ENCODE measurements at regions of chr15 and their contacts with region 1.

Region 1: DNA sequence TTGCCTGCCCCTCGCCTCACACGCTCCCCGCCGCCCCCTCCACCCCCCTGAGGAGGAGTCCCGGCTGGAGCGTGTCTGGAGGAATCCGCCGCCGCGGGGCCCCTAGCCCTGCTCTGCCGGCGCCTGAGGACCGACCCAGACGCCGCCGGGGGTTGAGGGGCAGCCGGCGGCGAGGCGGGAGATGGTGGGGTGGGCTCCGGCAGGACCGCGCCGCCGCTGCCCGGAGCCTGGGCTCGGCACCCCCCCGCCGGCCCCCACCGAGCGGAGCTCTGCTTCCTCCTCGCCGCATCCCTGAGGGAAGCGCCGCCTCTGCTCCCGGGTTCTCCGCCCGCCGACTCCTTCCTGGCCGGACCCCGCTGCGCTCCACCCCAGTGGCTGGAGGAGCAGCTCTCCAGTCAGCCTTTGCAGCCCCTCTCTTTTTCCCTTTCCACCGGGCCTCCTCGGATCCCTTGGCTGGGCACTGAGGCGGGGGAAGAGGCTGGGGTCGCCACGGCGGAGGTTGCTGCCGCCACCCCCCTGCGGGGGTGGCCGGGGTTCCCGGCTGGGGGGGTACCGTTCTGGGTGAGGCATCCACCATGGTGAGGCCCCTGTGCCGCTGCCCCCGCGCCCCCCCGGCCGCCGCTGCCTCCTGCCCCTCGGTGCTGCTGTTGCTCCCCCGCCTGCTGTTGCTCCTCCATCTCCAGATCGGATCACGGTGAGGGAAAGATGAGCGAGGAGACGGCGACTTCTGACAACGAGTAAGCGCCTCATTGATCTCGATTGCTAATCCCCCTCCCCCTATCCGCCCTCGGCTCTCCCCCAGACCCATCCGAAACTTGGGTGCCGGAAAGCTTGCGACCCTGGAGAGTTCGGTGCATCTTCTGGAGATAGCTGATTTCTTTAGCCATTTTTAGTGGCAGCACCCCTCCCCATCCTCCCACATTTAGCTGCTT is at the start of gene SPRED1:
- DNase-seq: peak; percentile 49
- ATAC-seq: peak; percentile 11
- H3K4me3 Mint-ChIP-seq: peak within 1 kb of the TSS; percentile 85
- H3K27ac Mint-ChIP-seq: peak within 1 kb of the TSS; percentile 69
- H3K4me1 Mint-ChIP-seq: peaks cover 25% of the 10 kb centered on the region
- H3K27me3 Mint-ChIP-seq: peaks cover 29% of the 10 kb centered on the region
- total RNA-seq, gene SPRED1: 0.90 to 0.96 TPM

Region 2: DNA sequence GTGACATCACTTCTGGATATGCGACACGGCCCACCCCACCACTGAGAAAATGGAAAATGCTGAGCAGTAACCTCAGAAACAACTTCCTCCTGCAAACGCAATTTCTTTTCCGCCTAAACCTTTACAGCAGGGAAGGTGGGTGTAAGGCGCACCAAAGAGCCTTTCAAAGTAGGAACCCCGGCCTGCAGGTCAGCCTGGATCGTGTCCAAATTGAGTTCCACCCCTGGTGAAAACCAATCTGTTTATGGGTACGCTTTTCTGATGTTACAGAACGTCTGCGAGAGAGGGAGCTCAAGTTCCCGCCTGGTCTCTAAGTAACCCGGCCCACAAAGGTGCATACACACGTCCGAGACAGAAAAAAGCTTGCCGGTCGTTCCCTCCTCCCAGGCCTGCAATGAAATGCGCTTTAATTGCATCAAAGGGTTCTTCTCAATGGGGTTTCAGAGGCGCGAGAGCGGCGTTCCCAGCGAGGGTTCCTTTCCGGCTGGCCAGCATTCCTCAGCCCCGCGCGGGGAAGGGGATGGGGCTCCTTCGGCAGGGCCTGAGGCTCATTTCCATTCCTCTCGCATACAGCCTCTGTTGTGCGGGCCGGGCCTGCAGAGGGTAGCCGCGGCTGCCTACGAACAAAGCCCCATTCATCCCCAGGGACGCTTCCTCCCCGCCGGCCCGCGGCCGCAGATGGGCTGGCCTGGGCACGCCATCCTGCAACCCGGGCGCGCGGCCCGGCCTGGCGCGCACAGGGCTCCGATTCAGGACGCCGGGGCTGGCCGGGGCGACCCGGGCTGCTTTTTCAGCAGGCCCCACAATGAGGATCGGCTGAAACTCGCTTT is 180.2 kb before region 1 on chr15:
- CTCF ChIA-PET with region 1: no interaction called
- POLR2A ChIA-PET with region 1: no interaction called
- intact Hi-C with region 1: loop called (anchors 5 to 10 kb)
- DNase-seq: peak; percentile 53
- ATAC-seq: peak; percentile 52
- H3K4me3 Mint-ChIP-seq: peak overlapping the region; percentile 49
- H3K27ac Mint-ChIP-seq: peak overlapping the region; percentile 73
- H3K4me1 Mint-ChIP-seq: peaks cover 45% of the 10 kb centered on the region
- H3K27me3 Mint-ChIP-seq: peaks cover 56% of the 10 kb centered on the region

Region 3: DNA sequence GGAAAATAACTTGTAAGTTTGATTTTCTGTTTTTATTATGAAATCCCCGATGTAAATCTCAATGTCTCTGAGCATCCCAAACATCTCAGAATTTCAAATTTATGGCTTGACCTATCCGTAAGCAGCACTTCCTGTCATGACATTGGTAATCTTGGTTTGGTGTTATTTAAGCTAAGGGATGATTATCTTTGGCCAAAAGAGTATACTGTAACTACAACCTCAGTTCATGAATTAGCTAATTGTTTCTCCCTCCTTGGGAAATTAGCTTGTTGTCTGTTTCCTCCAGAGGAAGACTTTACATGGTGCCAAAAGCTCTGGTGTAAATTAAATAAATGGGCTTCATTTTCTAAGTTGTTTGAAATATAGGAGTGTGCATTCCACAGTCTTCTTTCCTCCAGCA is 28.3 kb before region 1 on chr15:
- CTCF ChIA-PET with region 1: no interaction called
- POLR2A ChIA-PET with region 1: no interaction called
- intact Hi-C with region 1: no loop called
- DNase-seq: no peak
- ATAC-seq: no peak
- H3K4me3 Mint-ChIP-seq: no peak overlapping the region
- H3K27ac Mint-ChIP-seq: no peak overlapping the region
- H3K4me1 Mint-ChIP-seq: no peaks in the 10 kb centered on the region
- H3K27me3 Mint-ChIP-seq: no peaks in the 10 kb centered on the region

Region 4: GRCh38 chr15:38297623-38298388 is 45.1 kb after region 1 on chr15:
- CTCF ChIA-PET with region 1: interaction called, 3 read pairs
- POLR2A ChIA-PET with region 1: no interaction called
- intact Hi-C with region 1: loop called in 1 of 2 experiments (anchors 2 kb)
- DNase-seq: no peak
- ATAC-seq: peak; percentile 63
- H3K4me3 Mint-ChIP-seq: no peak overlapping the region
- H3K27ac Mint-ChIP-seq: no peak overlapping the region
- H3K4me1 Mint-ChIP-seq: peaks cover 6% of the 10 kb centered on the region
- H3K27me3 Mint-ChIP-seq: peaks cover 11% of the 10 kb centered on the region

Region 5: GRCh38 chr15:38308797-38309196 is 56.0 kb after region 1 on chr15:
- CTCF ChIA-PET with region 1: no interaction called
- POLR2A ChIA-PET with region 1: no interaction called
- intact Hi-C with region 1: loop called in 1 of 2 experiments (anchors 5 kb)
- DNase-seq: peak; percentile 28
- ATAC-seq: peak; percentile 76
- H3K4me3 Mint-ChIP-seq: no peak overlapping the region
- H3K27ac Mint-ChIP-seq: no peak overlapping the region
- H3K4me1 Mint-ChIP-seq: peaks cover 11% of the 10 kb centered on the region
- H3K27me3 Mint-ChIP-seq: peaks cover 25% of the 10 kb centered on the region

Region 6: DNA sequence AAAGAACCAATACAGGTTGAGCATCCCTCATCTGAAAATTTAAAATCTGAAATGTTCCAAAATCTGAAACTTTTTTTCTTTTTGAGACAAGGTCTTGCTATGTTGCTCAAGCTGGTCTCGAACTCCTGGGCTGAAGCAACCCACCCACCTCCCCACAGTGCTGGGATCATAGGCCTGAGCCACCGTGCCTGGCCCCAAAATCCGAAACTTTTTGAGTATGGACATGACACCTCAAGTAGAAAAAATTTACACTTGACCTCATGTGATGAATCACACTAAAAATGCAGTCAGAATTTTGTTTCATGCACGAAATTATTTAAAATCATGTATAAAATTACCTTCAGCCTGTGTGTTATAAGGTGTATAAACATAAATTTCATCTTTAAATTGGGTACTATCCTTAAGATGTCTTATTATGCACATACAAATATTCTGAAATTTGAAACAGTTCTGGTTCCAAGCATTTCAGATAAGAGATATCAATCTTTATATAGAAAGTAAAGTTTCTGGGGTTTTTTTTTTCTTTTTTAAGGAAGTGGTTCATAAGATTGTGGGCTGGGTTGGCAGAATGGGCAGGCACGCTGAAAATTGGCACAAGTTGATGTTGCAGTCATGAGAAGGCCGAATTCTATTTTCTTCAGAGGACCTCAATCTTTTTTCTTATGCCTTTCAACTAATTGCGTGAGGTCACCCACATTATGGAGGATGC is 72.3 kb after region 1 on chr15:
- CTCF ChIA-PET with region 1: no interaction called
- POLR2A ChIA-PET with region 1: no interaction called
- intact Hi-C with region 1: no loop called
- DNase-seq: no peak
- ATAC-seq: no peak
- H3K4me3 Mint-ChIP-seq: no peak overlapping the region
- H3K27ac Mint-ChIP-seq: no peak overlapping the region
- H3K4me1 Mint-ChIP-seq: no peaks in the 10 kb centered on the region
- H3K27me3 Mint-ChIP-seq: no peaks in the 10 kb centered on the region

Region 7: GRCh38 chr15:38453971-38454695 is 201.4 kb after region 1 on chr15 and contains the start of gene FAM98B:
- CTCF ChIA-PET with region 1: interaction called, 4 read pairs
- POLR2A ChIA-PET with region 1: no interaction called
- intact Hi-C with region 1: loop called in 1 of 2 experiments (anchors 2 kb)
- DNase-seq: peak; percentile 92
- ATAC-seq: peak; percentile 92
- H3K4me3 Mint-ChIP-seq: peak within 1 kb of the TSS; percentile 78
- H3K27ac Mint-ChIP-seq: peak within 1 kb of the TSS; percentile 93
- H3K4me1 Mint-ChIP-seq: peaks cover 31% of the 10 kb centered on the region
- H3K27me3 Mint-ChIP-seq: no peaks in the 10 kb centered on the region
- total RNA-seq, gene FAM98B: 54.2 to 81.9 TPM

Measured in activated CD4-positive, alpha-beta T cell treated with anti-CD3 and anti-CD28 coated beads for 36 hours (primary cell).